IMR-90 (cell line): ENCODE measurements at regions of chr18 and their contacts with region 1.

Region 1: GRCh38 chr18:43812627-43813026 is 535.3 kb upstream of the SYT4 start:
- DNase-seq: no peak
- ATAC-seq: no peak
- H3K4me3 ChIP-seq: no peak overlapping the region
- H3K27ac ChIP-seq: no peak overlapping the region
- H3K4me1 ChIP-seq: no peaks in the 10 kb centered on the region
- H3K27me3 ChIP-seq: no peaks in the 10 kb centered on the region
- CTCF ChIP-seq: no peak
- POLR2A ChIP-seq: no peak
- RAD21 ChIP-seq: no peak

Region 2: DNA sequence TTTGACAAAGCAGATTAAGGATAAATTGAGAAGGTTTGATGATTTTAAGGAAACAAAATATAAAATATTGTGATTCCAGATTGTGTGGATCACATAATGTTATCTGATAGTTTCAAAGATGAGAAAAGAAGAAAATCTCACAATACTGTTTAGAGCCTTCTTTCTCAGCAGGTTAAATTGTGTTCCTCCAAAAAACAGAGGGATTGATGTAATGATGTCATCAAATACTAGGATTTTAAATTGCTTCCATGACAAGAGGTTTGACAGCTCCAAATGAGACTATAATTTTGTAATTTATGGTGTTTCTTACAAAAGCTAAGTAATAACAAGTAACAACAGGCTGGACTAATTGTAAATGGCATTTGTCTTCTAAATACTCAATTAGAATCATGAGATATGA is 168.6 kb after region 1 on chr18:
- CTCF ChIA-PET with region 1: no interaction called
- POLR2A ChIA-PET with region 1: no interaction called
- dilution Hi-C with region 1: no loop called
- in situ Hi-C with region 1: no loop called
- intact Hi-C with region 1: loop called (anchors 5 kb)
- DNase-seq: no peak
- ATAC-seq: no peak
- H3K4me3 ChIP-seq: no peak overlapping the region
- H3K27ac ChIP-seq: no peak overlapping the region
- H3K4me1 ChIP-seq: no peaks in the 10 kb centered on the region
- H3K27me3 ChIP-seq: no peaks in the 10 kb centered on the region
- CTCF ChIP-seq: no peak
- POLR2A ChIP-seq: no peak
- RAD21 ChIP-seq: no peak